Transverse colon (tissue), 4 donors: ENCODE measurements at regions of chrX and their contacts with region 1.

Region 1: GRCh38 chrX:20461576-20461975 is 194.9 kb upstream of the RPS6KA3 start:
- DNase-seq: no peak
- H3K4me3 ChIP-seq: no peak overlapping the region
- H3K27ac ChIP-seq: no peak overlapping the region
- H3K4me1 ChIP-seq: no peaks in the 10 kb centered on the region
- H3K27me3 ChIP-seq: no peaks in the 10 kb centered on the region
- CTCF ChIP-seq: no peak
- EP300 ChIP-seq: no peak
- POLR2A ChIP-seq: no peak

Region 2: DNA sequence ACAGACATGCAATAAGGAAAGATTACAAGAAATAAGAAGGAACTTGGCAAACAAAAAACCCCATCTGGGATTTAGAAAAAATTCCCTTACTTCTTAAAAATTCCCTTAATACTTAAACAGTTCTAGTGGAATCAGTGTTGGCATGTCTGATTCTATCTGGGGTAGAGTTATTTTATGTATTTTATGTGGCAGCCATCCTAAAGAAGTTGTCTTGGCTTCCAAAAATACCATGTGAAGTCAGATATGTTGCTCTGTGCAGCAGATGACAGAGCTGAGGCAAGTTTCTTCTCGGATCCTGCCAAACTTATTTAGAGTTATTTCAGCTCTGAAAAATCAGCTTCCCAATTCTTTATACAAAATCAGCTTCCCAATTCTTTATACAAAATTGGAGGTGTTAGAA is 1408.9 kb after region 1 on chrX:
- in situ Hi-C with region 1: no loop called
- intact Hi-C with region 1: loop called (anchors 5 kb)
- DNase-seq: no peak
- H3K4me3 ChIP-seq: no peak overlapping the region
- H3K27ac ChIP-seq: no peak overlapping the region
- H3K4me1 ChIP-seq: no peaks in the 10 kb centered on the region
- H3K27me3 ChIP-seq: no peaks in the 10 kb centered on the region
- CTCF ChIP-seq: no peak
- EP300 ChIP-seq: no peak
- POLR2A ChIP-seq: no peak